PC-9 (cell line): ENCODE measurements at regions of chr7 and their contacts with region 1.

Region 1: DNA sequence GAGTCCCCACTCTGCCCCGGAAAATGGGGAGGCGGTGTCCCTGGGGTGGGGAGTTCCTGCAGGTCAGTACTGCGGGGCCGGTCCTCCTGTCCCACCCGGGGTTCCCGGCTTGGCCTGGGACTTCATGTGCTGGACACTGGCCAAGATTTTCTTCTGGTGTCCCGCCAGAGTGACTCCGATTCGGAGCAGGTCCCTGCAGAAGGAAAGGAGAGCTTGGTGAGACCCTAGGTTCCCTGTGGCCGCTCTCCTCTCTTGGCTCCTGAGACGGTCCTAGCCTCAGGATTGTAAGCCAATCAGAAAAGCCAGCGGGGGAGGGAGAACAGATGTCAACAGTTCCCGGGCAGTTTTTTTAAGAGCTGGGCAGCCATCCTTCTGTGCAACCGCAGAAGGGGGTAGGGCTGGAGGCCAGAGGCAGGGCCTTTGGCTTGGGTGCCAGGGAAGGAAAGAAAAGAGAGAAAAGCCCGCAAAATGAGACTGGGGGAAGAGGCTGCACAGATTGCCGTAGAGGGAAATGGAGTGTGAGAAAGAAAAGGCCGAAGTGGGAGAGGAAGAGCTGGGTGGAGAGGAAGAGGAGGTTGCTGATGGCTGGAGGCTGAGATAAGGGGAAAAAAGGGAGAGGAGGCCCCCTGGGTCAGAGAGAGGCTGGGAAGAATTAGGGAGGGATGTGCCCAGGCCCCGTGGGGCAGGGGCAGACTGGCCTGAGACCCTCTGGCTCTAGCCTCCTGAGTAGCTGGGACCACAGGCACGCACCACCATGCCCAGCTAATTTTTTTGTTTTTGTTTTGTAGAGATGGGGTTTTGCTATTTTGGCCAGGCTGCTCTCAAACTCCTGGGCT is 23.7 kb downstream of the EPHB4 start:
- DNase-seq: peak in 1 of 2 experiments; percentile 76
- H3K4me3 ChIP-seq: no peak overlapping the region
- H3K27ac ChIP-seq: 0 out of 2 replicates have a peak overlapping the region, but pooled peaks have one; percentile 67
- H3K4me1 ChIP-seq: peaks cover 52% of the 10 kb centered on the region
- H3K27me3 ChIP-seq: no peaks in the 10 kb centered on the region
- CTCF ChIP-seq: no peak

Region 2: GRCh38 chr7:100680576-100681271 is 122.9 kb before region 1 on chr7:
- CTCF ChIA-PET with region 1: no interaction called
- POLR2A ChIA-PET with region 1: interaction called, 22 read pairs
- intact Hi-C with region 1: no loop called
- DNase-seq: no peak
- H3K4me3 ChIP-seq: no peak overlapping the region
- H3K27ac ChIP-seq: no peak overlapping the region
- H3K4me1 ChIP-seq: no peaks in the 10 kb centered on the region; the same call in 1 of the 2 replicates
- H3K27me3 ChIP-seq: no peaks in the 10 kb centered on the region
- CTCF ChIP-seq: no peak

Region 3: GRCh38 chr7:100726996-100727761 is 76.4 kb before region 1 on chr7:
- CTCF ChIA-PET with region 1: interaction called, 3 read pairs
- POLR2A ChIA-PET with region 1: no interaction called
- intact Hi-C with region 1: loop called (anchors 5 kb)
- DNase-seq: no peak
- H3K4me3 ChIP-seq: no peak overlapping the region
- H3K27ac ChIP-seq: no peak overlapping the region
- H3K4me1 ChIP-seq: peaks cover 19% of the 10 kb centered on the region
- H3K27me3 ChIP-seq: no peaks in the 10 kb centered on the region
- CTCF ChIP-seq: no peak

Region 4: GRCh38 chr7:100852048-100852872 is 48.6 kb after region 1 on chr7 and contains the start of gene SLC12A9:
- CTCF ChIA-PET with region 1: interaction called, 16 read pairs
- POLR2A ChIA-PET with region 1: interaction called, 6 read pairs
- intact Hi-C with region 1: loop called (anchors 1 kb)
- DNase-seq: peak; percentile 76 to 93
- H3K4me3 ChIP-seq: peak within 1 kb of the TSS; percentile 97
- H3K27ac ChIP-seq: no peak within 1 kb of the TSS
- H3K4me1 ChIP-seq: peaks cover 9% of the 10 kb centered on the region
- H3K27me3 ChIP-seq: no peaks in the 10 kb centered on the region
- CTCF ChIP-seq: peak; percentile 95
- total RNA-seq, gene SLC12A9: 34.7 and 36.7 TPM in 2 replicates

Region 5: DNA sequence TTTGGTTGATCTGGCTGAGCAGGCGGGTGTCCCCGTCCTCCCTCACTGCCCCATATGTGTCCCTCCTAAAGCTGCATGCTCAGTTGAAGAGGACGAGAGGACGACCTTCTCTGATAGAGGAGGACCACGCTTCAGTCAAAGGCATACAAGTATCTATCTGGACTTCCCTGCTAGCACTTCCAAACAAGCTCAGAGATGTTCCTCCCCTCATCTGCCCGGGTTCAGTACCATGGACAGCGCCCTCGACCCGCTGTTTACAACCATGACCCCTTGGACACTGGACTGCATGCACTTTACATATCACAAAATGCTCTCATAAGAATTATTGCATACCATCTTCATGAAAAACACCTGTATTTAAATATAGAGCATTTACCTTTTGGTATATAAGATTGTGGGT is 254.7 kb after region 1 on chr7:
- CTCF ChIA-PET with region 1: no interaction called
- POLR2A ChIA-PET with region 1: no interaction called
- intact Hi-C with region 1: loop called (anchors 1 kb)
- DNase-seq: peak in 1 of 2 experiments; percentile 58
- H3K4me3 ChIP-seq: no peak overlapping the region
- H3K27ac ChIP-seq: no peak overlapping the region
- H3K4me1 ChIP-seq: no peaks in the 10 kb centered on the region
- H3K27me3 ChIP-seq: peaks cover 61% of the 10 kb centered on the region
- CTCF ChIP-seq: no peak

Region 6: DNA sequence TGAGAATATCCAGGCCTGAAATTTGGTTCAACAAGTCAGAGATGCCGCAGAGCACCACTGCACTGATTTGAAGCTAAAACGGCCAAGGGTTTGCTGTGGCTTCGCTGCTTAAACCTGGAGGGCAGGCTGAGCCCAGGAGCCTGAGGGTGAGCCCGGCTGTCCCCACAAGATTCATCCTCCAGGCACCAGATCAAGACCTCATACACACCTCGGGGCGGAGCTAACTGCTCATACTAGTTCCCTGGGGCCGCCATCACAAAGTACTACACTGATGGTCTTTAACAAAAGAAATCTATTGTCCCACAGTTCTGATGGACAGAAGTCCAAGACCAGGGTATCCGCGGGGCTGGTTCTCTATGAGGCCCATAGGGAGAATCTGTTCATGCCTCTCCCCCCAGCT is 264.8 kb after region 1 on chr7:
- CTCF ChIA-PET with region 1: no interaction called
- POLR2A ChIA-PET with region 1: no interaction called
- intact Hi-C with region 1: no loop called
- DNase-seq: no peak
- H3K4me3 ChIP-seq: no peak overlapping the region
- H3K27ac ChIP-seq: no peak overlapping the region
- H3K4me1 ChIP-seq: no peaks in the 10 kb centered on the region
- H3K27me3 ChIP-seq: peaks cover 14% of the 10 kb centered on the region
- CTCF ChIP-seq: no peak